Gastrocnemius medialis (tissue), 4 donors: ENCODE measurements at regions of chr6 and their contacts with region 1.

Region 1: GRCh38 chr6:110528101-110528929 is 51.9 kb upstream of the SLC22A16 start:
- DNase-seq: no peak
- ATAC-seq: peak; percentile 66 to 78
- H3K4me3 ChIP-seq: no peak overlapping the region
- H3K27ac ChIP-seq: peak overlapping the region in 1 of 4 donors; percentile 15
- H3K4me1 ChIP-seq: peaks cover 0 to 3% of the 10 kb centered on the region in 2 donors
- H3K27me3 ChIP-seq: no peaks in the 10 kb centered on the region
- CTCF ChIP-seq: peak; percentile 53 to 68 (median 61)
- POLR2A ChIP-seq: no peak

Region 2: GRCh38 chr6:109772961-109773431 is 755.3 kb before region 1 on chr6:
- in situ Hi-C with region 1: no loop called
- intact Hi-C with region 1: no loop called
- DNase-seq: peak in 1 of 2 donors; percentile 18
- ATAC-seq: peak in 1 of 2 donors; percentile 62
- H3K4me3 ChIP-seq: no peak overlapping the region
- H3K27ac ChIP-seq: peak overlapping the region in 1 of 4 donors; percentile 22
- H3K4me1 ChIP-seq: peaks cover 10 to 11% of the 10 kb centered on the region in 2 donors
- H3K27me3 ChIP-seq: no peaks in the 10 kb centered on the region
- CTCF ChIP-seq: no peak
- POLR2A ChIP-seq: no peak

Region 3: DNA sequence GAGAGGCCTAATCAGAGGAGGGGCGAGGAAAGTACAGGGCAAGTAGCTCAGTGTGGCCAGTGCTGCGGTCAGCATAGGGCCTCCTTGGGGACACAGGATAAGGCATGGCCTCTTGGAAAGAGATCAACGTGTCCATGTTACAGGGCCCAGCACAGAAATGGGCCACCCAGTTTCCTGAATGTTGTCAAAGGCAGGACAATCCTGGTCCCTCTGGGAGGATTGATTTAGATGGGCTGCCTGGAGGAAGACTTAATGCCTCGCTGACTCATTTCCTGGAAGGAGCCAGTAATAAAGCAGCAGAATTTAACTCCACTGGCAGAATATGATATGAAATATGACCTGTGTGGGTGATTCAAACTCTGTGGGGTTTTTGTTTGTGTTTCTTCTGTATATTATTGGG is 129.5 kb before region 1 on chr6:
- in situ Hi-C with region 1: no loop called
- intact Hi-C with region 1: no loop called
- DNase-seq: no peak
- ATAC-seq: no peak
- H3K4me3 ChIP-seq: no peak overlapping the region
- H3K27ac ChIP-seq: no peak overlapping the region
- H3K4me1 ChIP-seq: no peaks in the 10 kb centered on the region
- H3K27me3 ChIP-seq: no peaks in the 10 kb centered on the region
- CTCF ChIP-seq: no peak
- POLR2A ChIP-seq: no peak

Region 4: GRCh38 chr6:110671116-110671846 is 143.0 kb after region 1 on chr6:
- in situ Hi-C with region 1: loop called in 1 of 4 experiments (anchors 10 kb)
- intact Hi-C with region 1: no loop called
- DNase-seq: no peak
- ATAC-seq: no peak
- H3K4me3 ChIP-seq: no peak overlapping the region
- H3K27ac ChIP-seq: no peak overlapping the region
- H3K4me1 ChIP-seq: peaks cover 0 to 6% of the 10 kb centered on the region in 2 donors
- H3K27me3 ChIP-seq: no peaks in the 10 kb centered on the region
- CTCF ChIP-seq: no peak
- POLR2A ChIP-seq: no peak

Region 5: GRCh38 chr6:110944681-110945151 is 416.4 kb after region 1 on chr6:
- in situ Hi-C with region 1: loop called in 3 of 4 experiments (anchors 5 to 25 kb)
- intact Hi-C with region 1: no loop called
- DNase-seq: no peak
- ATAC-seq: no peak
- H3K4me3 ChIP-seq: no peak overlapping the region
- H3K27ac ChIP-seq: no peak overlapping the region
- H3K4me1 ChIP-seq: no peaks in the 10 kb centered on the region
- H3K27me3 ChIP-seq: no peaks in the 10 kb centered on the region
- CTCF ChIP-seq: no peak
- POLR2A ChIP-seq: no peak

Region 6: DNA sequence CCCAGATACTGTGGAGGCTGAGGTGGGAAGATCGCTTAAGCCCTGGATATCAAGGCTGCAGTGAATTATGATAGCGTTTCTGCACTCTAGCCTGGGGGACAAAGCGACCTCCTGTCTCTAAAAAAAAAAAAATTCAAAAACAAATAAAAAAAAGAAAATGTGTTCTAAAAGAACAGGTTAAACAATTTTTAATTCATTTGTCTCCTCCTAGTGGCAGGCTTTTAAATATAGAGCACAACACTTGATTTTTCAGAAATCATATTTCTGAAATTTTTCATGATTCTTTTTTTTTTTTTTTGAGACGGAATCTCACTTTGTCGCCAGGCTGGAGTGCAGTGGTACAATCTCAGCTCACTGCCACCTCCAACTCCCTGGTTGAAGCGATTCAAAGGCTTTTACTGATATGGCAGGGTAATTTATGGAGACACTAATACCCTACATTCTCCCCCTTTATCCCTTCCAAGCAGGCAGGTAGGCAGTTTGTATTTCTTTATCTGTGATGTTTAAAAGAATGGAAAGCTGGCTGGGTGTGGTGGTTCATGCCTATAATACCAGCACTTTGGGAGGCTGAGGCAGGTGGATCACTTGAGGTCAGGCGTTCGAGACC is 421.5 kb after region 1 on chr6:
- in situ Hi-C with region 1: loop called (anchors 5 to 25 kb)
- intact Hi-C with region 1: no loop called
- DNase-seq: no peak
- ATAC-seq: no peak
- H3K4me3 ChIP-seq: no peak overlapping the region
- H3K27ac ChIP-seq: no peak overlapping the region
- H3K4me1 ChIP-seq: no peaks in the 10 kb centered on the region
- H3K27me3 ChIP-seq: no peaks in the 10 kb centered on the region
- CTCF ChIP-seq: peak in 4 of 5 experiments; percentile 24 to 59 (median 38)
- POLR2A ChIP-seq: no peak

Region 7: GRCh38 chr6:110999634-111000270 is 471.4 kb after region 1 on chr6:
- in situ Hi-C with region 1: no loop called
- intact Hi-C with region 1: loop called (anchors 2 kb)
- DNase-seq: no peak
- ATAC-seq: no peak
- H3K4me3 ChIP-seq: no peak overlapping the region
- H3K27ac ChIP-seq: no peak overlapping the region
- H3K4me1 ChIP-seq: no peaks in the 10 kb centered on the region
- H3K27me3 ChIP-seq: no peaks in the 10 kb centered on the region
- CTCF ChIP-seq: peak in 4 of 5 experiments; percentile 24 to 46 (median 41)
- POLR2A ChIP-seq: no peak

Region 8: DNA sequence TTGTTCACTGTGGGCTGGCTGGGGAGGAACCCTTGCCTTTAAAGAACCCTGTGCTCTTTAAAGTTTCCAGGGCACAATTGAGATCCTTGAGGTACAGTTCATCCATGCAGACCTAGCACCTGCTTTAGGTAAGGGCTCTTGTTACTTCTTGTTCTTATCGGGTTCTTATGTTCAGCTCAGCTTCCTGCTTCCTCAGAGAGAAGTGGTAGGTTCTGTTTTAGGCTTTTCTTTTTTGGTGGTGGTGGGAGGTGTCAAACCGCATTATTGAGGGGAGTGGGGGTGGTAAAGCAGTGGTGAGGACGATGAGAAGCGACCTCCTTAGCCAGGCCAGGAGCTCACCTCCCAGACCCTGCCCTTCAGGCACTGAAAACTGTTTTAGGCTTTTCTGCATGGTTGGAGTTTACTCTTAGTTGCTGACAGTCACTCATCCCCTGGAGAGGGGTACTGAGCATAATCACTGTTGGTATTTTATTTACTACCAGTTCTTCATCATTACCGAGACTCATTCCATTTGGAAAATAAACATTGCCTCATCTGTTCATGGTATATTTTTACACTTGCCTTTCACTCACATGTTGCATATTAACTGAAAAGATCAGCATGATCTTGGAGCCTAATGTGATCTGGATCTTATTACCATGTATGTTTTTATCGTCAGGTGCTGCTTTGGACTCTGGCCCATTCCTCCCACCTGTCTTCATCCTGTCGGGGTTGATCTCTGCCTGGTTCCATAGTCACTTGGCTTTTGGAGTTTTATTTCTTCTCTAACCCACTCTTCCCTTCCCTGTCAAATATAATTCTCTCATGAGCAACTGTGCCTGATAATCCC is 594.4 kb after region 1 on chr6:
- in situ Hi-C with region 1: no loop called
- intact Hi-C with region 1: no loop called
- DNase-seq: peak; percentile 75 to 80
- ATAC-seq: peak; percentile 79 to 82
- H3K4me3 ChIP-seq: peak overlapping the region; percentile 21 to 48 (median 40)
- H3K27ac ChIP-seq: peak overlapping the region; percentile 88 to 98 (median 92)
- H3K4me1 ChIP-seq: peaks cover 36 to 60% of the 10 kb centered on the region in 2 donors
- H3K27me3 ChIP-seq: no peaks in the 10 kb centered on the region
- CTCF ChIP-seq: no peak
- POLR2A ChIP-seq: peak; percentile 29 to 38